Transverse colon (tissue), 4 donors: ENCODE measurements at regions of chr14 and their contacts with region 1.

Region 1: DNA sequence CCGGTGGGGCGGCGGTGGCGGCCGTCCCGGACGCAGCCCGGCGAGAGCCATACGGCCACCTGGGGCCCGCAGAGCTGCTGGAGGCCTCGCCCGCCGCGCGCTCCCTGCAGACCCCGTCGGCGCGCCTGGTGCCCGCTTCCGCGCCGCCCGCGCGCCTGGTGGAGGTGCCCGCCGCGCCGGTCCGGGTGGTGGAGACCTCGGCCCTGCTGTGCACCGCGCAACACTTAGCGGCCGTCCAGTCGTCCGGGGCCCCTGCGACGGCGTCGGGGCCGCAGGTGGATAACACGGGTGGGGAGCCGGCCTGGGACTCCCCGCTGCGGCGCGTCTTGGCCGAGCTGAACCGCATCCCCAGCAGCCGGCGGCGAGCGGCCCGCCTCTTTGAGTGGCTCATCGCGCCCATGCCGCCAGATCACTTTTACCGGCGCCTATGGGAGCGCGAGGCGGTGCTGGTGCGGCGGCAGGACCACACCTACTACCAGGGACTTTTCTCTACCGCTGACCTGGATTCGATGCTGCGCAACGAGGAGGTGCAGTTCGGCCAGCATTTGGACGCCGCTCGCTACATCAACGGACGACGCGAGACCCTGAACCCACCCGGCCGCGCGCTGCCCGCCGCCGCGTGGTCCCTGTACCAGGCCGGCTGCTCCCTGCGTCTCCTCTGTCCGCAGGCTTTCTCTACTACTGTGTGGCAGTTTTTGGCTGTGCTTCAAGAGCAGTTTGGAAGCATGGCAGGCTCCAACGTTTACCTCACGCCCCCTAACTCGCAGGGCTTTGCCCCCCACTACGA is 716 bp downstream of the RIOX1 start:
- DNase-seq: peak; percentile 79
- H3K4me3 ChIP-seq: peak overlapping the region; percentile 67 to 86 (median 76)
- H3K27ac ChIP-seq: peak overlapping the region; percentile 94 to 97 (median 96)
- H3K4me1 ChIP-seq: peaks cover 14 to 30% (median 24%) of the 10 kb centered on the region in 4 donors
- H3K27me3 ChIP-seq: no peaks in the 10 kb centered on the region
- CTCF ChIP-seq: no peak
- EP300 ChIP-seq: no peak
- POLR2A ChIP-seq: peak; percentile 1

Region 2: DNA sequence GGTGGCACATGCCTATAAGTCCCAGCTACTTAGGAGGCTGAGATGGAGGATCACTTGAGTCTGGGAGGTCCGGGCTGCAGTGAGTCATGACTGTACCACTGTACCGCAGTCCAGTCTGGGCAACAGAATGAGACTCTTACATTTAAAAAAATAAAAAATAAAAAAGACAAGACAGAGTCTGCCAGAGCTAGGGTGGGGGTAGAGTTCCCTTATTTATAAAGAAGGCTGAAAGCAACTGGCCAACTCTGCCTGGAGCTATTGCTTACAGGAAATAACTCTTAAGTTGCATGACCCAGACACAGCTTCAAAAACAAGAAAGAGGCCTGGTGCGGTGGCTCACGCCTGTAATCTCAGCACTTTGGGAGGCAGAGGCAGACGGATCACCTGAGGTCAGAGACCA is 64.6 kb before region 1 on chr14:
- in situ Hi-C with region 1: no loop called
- intact Hi-C with region 1: no loop called
- DNase-seq: no peak
- H3K4me3 ChIP-seq: no peak overlapping the region
- H3K27ac ChIP-seq: peak overlapping the region; percentile 42 to 61 (median 57)
- H3K4me1 ChIP-seq: peaks cover 0 to 72% (median 50%) of the 10 kb centered on the region in 4 donors
- H3K27me3 ChIP-seq: no peaks in the 10 kb centered on the region
- CTCF ChIP-seq: no peak
- EP300 ChIP-seq: no peak
- POLR2A ChIP-seq: no peak

Region 3: DNA sequence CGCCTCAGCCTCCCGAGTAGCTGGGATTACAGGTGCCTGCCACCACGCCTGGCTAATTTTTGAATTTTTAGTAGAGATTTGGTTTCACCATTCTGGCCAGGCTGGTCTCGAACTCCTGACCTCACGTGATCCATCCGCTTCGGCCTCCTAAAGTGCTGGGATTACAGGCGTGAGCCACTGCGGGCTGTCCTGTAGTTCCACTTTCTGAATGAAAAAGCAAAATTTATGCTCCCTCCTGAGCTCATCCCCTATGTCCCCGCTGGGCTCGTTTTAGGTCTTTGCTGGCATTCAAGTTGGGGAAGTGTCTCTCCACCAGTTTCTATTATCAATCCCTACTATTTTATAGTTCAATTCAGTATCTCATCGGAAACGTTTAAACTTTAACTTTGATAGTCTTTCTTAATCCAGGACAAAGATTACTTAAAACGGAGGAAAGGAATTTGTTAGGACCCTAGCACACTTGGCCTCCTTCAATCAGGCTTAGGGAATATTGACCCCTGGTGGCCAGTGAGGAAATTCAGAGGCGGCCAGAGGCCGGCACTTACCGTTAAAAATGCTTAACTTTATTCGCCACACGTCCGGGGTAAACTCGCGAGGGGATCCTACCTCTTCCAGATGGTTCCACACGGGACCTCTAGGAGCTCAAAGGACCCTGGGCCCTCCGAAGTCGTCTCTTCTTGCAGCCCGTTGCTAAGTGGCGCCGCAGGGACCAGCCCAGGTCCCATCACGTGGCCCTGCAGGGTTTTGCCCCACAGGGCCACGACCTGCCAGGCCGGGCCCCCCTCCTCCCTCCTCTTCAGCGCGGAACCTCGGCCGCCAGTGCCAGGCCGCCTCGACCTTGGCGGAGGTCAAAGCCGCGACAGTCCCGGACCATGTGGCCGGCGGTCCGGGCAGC is 141.9 kb after region 1 on chr14:
- in situ Hi-C with region 1: loop called in 1 of 4 experiments (anchors 5 kb)
- intact Hi-C with region 1: no loop called
- DNase-seq: peak; percentile 69
- H3K4me3 ChIP-seq: peak overlapping the region; percentile 13 to 74 (median 48)
- H3K27ac ChIP-seq: peak overlapping the region; percentile 26 to 41 (median 30)
- H3K4me1 ChIP-seq: peaks cover 4 to 16% (median 11%) of the 10 kb centered on the region in 4 donors
- H3K27me3 ChIP-seq: no peaks in the 10 kb centered on the region
- CTCF ChIP-seq: peak; percentile 84 to 96 (median 87)
- EP300 ChIP-seq: no peak
- POLR2A ChIP-seq: no peak